Transverse colon (tissue), 4 donors: ENCODE measurements at regions of chr17 and their contacts with region 1.

Region 1: GRCh38 chr17:6843241-6843880 is 11.8 kb upstream of the TEKT1 start:
- DNase-seq: no peak
- H3K4me3 ChIP-seq: no peak overlapping the region
- H3K27ac ChIP-seq: no peak overlapping the region
- H3K4me1 ChIP-seq: no peaks in the 10 kb centered on the region
- H3K27me3 ChIP-seq: peaks cover 42% of the 10 kb centered on the region
- CTCF ChIP-seq: peak; percentile 37 to 57 (median 46)
- EP300 ChIP-seq: no peak
- POLR2A ChIP-seq: no peak

Region 2: DNA sequence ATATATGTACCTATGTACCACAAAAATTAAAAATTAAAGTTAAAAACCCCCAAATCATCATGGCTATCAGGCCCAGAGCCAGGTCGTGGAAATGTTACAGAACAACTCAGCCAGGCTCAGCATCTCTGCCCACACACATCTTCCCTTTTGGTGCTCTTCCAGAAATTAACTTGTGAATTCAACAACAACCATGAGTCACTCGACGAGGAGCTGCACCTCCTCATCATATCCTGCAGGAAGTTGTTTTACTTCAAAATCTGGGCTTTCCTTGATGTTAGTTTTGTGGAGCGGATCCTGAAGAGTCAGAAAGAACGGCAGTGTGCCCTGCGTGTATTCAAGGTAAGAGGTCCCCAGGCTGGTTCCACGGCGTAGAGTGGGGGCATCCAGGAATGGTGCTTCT is 56.7 kb before region 1 on chr17:
- in situ Hi-C with region 1: no loop called
- intact Hi-C with region 1: no loop called
- DNase-seq: no peak
- H3K4me3 ChIP-seq: no peak overlapping the region
- H3K27ac ChIP-seq: no peak overlapping the region
- H3K4me1 ChIP-seq: no peaks in the 10 kb centered on the region
- H3K27me3 ChIP-seq: peaks cover 73% of the 10 kb centered on the region
- CTCF ChIP-seq: no peak
- EP300 ChIP-seq: no peak
- POLR2A ChIP-seq: no peak

Region 3: GRCh38 chr17:6910987-6911603 is 67.7 kb after region 1 on chr17:
- in situ Hi-C with region 1: no loop called
- intact Hi-C with region 1: no loop called
- DNase-seq: no peak
- H3K4me3 ChIP-seq: no peak overlapping the region
- H3K27ac ChIP-seq: no peak overlapping the region
- H3K4me1 ChIP-seq: peaks cover 0 to 8% (median 4%) of the 10 kb centered on the region in 4 donors
- H3K27me3 ChIP-seq: peaks cover 22% of the 10 kb centered on the region
- CTCF ChIP-seq: peak; percentile 52 to 60 (median 57)
- EP300 ChIP-seq: no peak
- POLR2A ChIP-seq: no peak

Region 4: GRCh38 chr17:7004398-7005253 is 161.3 kb after region 1 on chr17:
- in situ Hi-C with region 1: no loop called
- intact Hi-C with region 1: loop called (anchors 10 kb)
- DNase-seq: no peak
- H3K4me3 ChIP-seq: no peak overlapping the region
- H3K27ac ChIP-seq: no peak overlapping the region
- H3K4me1 ChIP-seq: peaks cover 0 to 3% (median under 1%) of the 10 kb centered on the region in 4 donors
- H3K27me3 ChIP-seq: no peaks in the 10 kb centered on the region
- CTCF ChIP-seq: peak; percentile 65 to 79 (median 73)
- EP300 ChIP-seq: no peak
- POLR2A ChIP-seq: no peak